GM12878 (cell line): ENCODE measurements at regions of chr19 and their contacts with region 1.

Region 1: GRCh38 chr19:41706741-41707501 is 1.5 kb upstream of the CEACAM5 start:
- DNase-seq: peak; percentile 3
- ATAC-seq: peak; percentile 98
- H3K4me3 ChIP-seq: no peak overlapping the region
- H3K27ac ChIP-seq: no peak overlapping the region
- H3K4me1 ChIP-seq: no peaks in the 10 kb centered on the region
- H3K27me3 ChIP-seq: peaks cover 3% of the 10 kb centered on the region in 2 experiments
- CTCF ChIP-seq: peak; percentile 51 to 93 (median 58); a peak in 5 of 6 replicates
- EP300 ChIP-seq: no peak
- POLR2A ChIP-seq: no peak
- RAD21 ChIP-seq: no peak

Region 2: GRCh38 chr19:41746593-41747227 is 39.8 kb after region 1 on chr19:
- CTCF ChIA-PET with region 1: interaction called, 5 read pairs
- POLR2A ChIA-PET with region 1: no interaction called
- RAD21 ChIA-PET with region 1: no interaction called
- SMC1A ChIA-PET with region 1: no interaction called
- in situ Hi-C with region 1: no loop called
- intact Hi-C with region 1: loop called (anchors 1 kb)
- DNase-seq: no peak
- ATAC-seq: peak; percentile 87
- H3K4me3 ChIP-seq: no peak overlapping the region
- H3K27ac ChIP-seq: no peak overlapping the region
- H3K4me1 ChIP-seq: no peaks in the 10 kb centered on the region
- H3K27me3 ChIP-seq: peaks cover 0 to 8% of the 10 kb centered on the region in 2 experiments; a peak in 1 of 4 replicates
- CTCF ChIP-seq: peak; percentile 61 to 65 (median 64)
- EP300 ChIP-seq: no peak
- POLR2A ChIP-seq: no peak
- RAD21 ChIP-seq: peak; percentile 69